Body of pancreas (tissue), 4 donors: ENCODE measurements at regions of chr1 and their contacts with region 1.

Region 1: DNA sequence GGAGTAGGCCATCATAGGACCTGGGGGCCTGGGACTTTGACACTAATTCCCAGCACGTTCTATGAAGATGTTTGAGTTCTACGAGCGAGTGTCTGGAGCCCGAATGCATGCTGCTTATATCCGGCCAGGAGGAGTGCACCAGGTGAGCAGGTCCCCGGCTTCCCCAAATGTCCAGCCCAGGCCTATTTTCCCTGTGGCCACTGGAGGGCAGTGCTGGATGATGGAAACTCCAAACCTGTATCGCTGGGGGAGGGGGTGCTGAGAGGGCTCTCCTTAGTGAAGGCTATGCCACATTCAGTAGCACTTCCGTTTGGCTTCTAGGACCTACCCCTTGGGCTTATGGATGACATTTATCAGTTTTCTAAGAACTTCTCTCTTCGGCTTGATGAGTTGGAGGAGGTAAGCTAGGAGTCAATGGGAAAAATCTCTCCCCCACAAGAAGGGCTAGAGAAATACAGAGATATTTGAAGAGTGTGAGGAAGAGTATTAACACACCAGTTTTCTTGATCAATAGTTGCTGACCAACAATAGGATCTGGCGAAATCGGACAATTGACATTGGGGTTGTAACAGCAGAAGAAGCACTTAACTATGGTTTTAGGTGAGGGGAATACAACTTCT is 5.2 kb upstream of the FCER1G start:
- DNase-seq: peak; percentile 78 to 87 (median 84)
- ATAC-seq: peak; percentile 85
- H3K4me3 ChIP-seq: no peak overlapping the region
- H3K27ac ChIP-seq: no peak overlapping the region
- H3K4me1 ChIP-seq: no peaks in the 10 kb centered on the region
- H3K27me3 ChIP-seq: no peaks in the 10 kb centered on the region
- CTCF ChIP-seq: peak; percentile 84 to 93 (median 88)
- POLR2A ChIP-seq: no peak

Region 2: DNA sequence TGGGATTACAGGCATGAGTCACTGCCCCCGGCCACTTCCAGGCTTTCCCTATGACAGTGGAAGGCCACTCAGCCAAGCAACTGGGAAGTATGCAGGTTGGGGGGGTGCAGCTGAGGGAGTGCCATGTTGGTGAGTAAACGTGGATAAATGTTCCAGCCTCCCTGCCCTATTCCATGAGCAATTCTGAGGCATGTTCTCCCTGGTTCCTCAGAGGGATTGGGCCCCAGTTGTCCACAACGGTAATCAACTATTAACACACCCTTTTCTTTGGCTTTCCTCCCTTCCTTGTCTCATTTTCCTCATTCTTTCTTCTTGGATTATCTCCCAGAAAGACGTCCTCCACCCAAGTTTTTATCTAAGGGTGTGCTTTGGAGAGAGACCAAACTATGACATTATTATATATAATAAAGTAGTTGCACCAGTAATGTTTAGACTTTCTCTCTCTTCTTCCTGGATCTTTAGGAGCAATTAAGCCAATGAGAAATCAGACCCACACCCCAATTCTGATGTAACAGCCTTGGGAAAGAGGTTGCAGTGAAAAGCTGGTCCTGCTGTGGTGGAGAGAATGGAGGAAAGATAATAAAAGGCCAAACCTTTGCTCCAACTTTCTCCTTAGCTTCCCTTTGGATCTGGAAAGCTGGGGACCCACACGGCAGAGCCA is 1249.0 kb before region 1 on chr1:
- intact Hi-C with region 1: no loop called
- DNase-seq: peak in 1 of 4 donors; percentile 39
- ATAC-seq: peak; percentile 36
- H3K4me3 ChIP-seq: no peak overlapping the region
- H3K27ac ChIP-seq: peak overlapping the region in 1 of 4 donors; percentile 10
- H3K4me1 ChIP-seq: peaks cover 18% of the 10 kb centered on the region
- H3K27me3 ChIP-seq: no peaks in the 10 kb centered on the region
- CTCF ChIP-seq: no peak
- POLR2A ChIP-seq: no peak

Region 3: GRCh38 chr1:161159087-161159912 is 50.6 kb before region 1 on chr1 and contains the start of gene USP21:
- intact Hi-C with region 1: no loop called
- DNase-seq: peak; percentile 93 to 94 (median 94)
- ATAC-seq: peak; percentile 97
- H3K4me3 ChIP-seq: peak within 1 kb of the TSS; percentile 80 to 91
- H3K27ac ChIP-seq: peak within 1 kb of the TSS; percentile 57 to 85 (median 79)
- H3K4me1 ChIP-seq: peaks cover 47% of the 10 kb centered on the region
- H3K27me3 ChIP-seq: no peaks in the 10 kb centered on the region
- CTCF ChIP-seq: peak in 3 of 7 experiments; percentile 34 to 53 (median 41)
- POLR2A ChIP-seq: peak; percentile 45 to 77 (median 67)
- total RNA-seq, gene USP21: 17.8 to 21.0 TPM

Region 4: GRCh38 chr1:161351482-161351881 is 141.6 kb after region 1 on chr1:
- intact Hi-C with region 1: no loop called
- DNase-seq: no peak
- ATAC-seq: no peak
- H3K4me3 ChIP-seq: no peak overlapping the region
- H3K27ac ChIP-seq: no peak overlapping the region
- H3K4me1 ChIP-seq: no peaks in the 10 kb centered on the region
- H3K27me3 ChIP-seq: no peaks in the 10 kb centered on the region
- CTCF ChIP-seq: no peak
- POLR2A ChIP-seq: no peak

Region 5: DNA sequence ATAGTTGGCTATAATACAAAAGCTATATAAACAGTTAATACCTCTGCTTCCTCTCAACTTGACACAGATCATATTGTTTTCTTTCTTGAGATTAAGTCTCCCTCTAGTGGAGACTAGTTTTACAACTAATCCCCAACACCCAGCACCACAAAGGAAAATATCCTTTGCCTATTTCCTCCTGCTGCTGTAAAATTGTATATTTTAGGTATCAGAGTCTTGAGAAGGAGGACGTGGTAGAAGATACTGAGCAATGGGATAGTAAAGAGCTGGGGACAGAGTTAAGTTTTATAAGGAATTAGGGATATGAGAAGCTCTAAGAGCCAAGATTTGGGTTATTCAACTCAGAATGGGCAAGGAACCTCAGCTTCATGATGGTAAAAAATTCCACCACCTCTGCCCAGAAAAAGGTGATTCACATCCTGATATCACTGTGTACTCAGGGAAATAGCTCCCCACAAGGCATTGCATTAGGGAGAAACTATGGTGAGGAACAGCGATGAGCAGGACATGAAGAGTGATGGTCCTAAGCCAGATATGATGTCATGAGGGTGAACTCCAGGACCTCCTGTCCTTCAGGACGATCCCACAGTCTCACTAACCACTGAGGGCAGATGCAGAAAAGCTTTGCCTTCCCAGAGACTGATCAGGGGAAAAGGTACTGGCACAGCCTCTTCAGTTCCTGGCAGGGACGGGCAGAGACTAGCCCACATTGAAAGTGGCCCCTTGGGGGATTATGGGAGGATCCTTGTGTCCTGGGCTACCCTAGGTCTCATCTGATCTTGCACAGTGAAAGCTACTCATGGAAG is 172.5 kb after region 1 on chr1:
- intact Hi-C with region 1: loop called (anchors 5 kb)
- DNase-seq: no peak
- ATAC-seq: peak; percentile 90
- H3K4me3 ChIP-seq: no peak overlapping the region
- H3K27ac ChIP-seq: peak overlapping the region in 2 of 4 donors; percentile 3 to 62
- H3K4me1 ChIP-seq: peaks cover 4% of the 10 kb centered on the region
- H3K27me3 ChIP-seq: no peaks in the 10 kb centered on the region
- CTCF ChIP-seq: peak; percentile 28 to 80 (median 75)
- POLR2A ChIP-seq: no peak